Mammary epithelial cell (primary cell): ENCODE measurements at regions of chr12 and their contacts with region 1.

Region 1: GRCh38 chr12:65306366-65307168 is 28.1 kb downstream of the MSRB3 start:
- DNase-seq: peak; percentile 76
- H3K4me3 ChIP-seq: peak overlapping the region; percentile 20 to 33 (median 21)
- H3K27ac ChIP-seq: peak overlapping the region; percentile 90
- H3K4me1 ChIP-seq: peaks cover 29% of the 10 kb centered on the region
- H3K27me3 ChIP-seq: no peaks in the 10 kb centered on the region
- CTCF ChIP-seq: peak; percentile 83 to 84

Region 2: GRCh38 chr12:64890873-64891468 is 415.6 kb before region 1 on chr12:
- CTCF ChIA-PET with region 1: no interaction called
- dilution Hi-C with region 1: no loop called
- in situ Hi-C with region 1: no loop called
- intact Hi-C with region 1: loop called (anchors 5 kb)
- DNase-seq: peak; percentile 33
- H3K4me3 ChIP-seq: no peak overlapping the region
- H3K27ac ChIP-seq: no peak overlapping the region
- H3K4me1 ChIP-seq: no peaks in the 10 kb centered on the region
- H3K27me3 ChIP-seq: peaks cover 9% of the 10 kb centered on the region
- CTCF ChIP-seq: peak; percentile 61 to 67

Region 3: GRCh38 chr12:65343801-65344200 is 37.2 kb after region 1 on chr12:
- CTCF ChIA-PET with region 1: no interaction called
- dilution Hi-C with region 1: no loop called
- in situ Hi-C with region 1: no loop called
- intact Hi-C with region 1: no loop called
- DNase-seq: no peak
- H3K4me3 ChIP-seq: no peak overlapping the region
- H3K27ac ChIP-seq: no peak overlapping the region
- H3K4me1 ChIP-seq: no peaks in the 10 kb centered on the region
- H3K27me3 ChIP-seq: no peaks in the 10 kb centered on the region
- CTCF ChIP-seq: no peak

Region 4: GRCh38 chr12:65695113-65695865 is 388.7 kb after region 1 on chr12:
- CTCF ChIA-PET with region 1: no interaction called
- dilution Hi-C with region 1: no loop called
- in situ Hi-C with region 1: loop called in 1 of 2 experiments (anchors 25 kb)
- intact Hi-C with region 1: loop called (anchors 5 kb)
- DNase-seq: peak; percentile 98
- H3K4me3 ChIP-seq: no peak overlapping the region
- H3K27ac ChIP-seq: peak overlapping the region; percentile 67
- H3K4me1 ChIP-seq: peaks cover 28% of the 10 kb centered on the region
- H3K27me3 ChIP-seq: no peaks in the 10 kb centered on the region
- CTCF ChIP-seq: no peak

Region 5: GRCh38 chr12:65986047-65986446 is 679.5 kb after region 1 on chr12:
- CTCF ChIA-PET with region 1: no interaction called
- dilution Hi-C with region 1: no loop called
- in situ Hi-C with region 1: loop called in 1 of 2 experiments (anchors 25 kb)
- intact Hi-C with region 1: loop called (anchors 2 kb)
- DNase-seq: no peak
- H3K4me3 ChIP-seq: no peak overlapping the region
- H3K27ac ChIP-seq: no peak overlapping the region
- H3K4me1 ChIP-seq: no peaks in the 10 kb centered on the region
- H3K27me3 ChIP-seq: no peaks in the 10 kb centered on the region
- CTCF ChIP-seq: no peak

Region 6: DNA sequence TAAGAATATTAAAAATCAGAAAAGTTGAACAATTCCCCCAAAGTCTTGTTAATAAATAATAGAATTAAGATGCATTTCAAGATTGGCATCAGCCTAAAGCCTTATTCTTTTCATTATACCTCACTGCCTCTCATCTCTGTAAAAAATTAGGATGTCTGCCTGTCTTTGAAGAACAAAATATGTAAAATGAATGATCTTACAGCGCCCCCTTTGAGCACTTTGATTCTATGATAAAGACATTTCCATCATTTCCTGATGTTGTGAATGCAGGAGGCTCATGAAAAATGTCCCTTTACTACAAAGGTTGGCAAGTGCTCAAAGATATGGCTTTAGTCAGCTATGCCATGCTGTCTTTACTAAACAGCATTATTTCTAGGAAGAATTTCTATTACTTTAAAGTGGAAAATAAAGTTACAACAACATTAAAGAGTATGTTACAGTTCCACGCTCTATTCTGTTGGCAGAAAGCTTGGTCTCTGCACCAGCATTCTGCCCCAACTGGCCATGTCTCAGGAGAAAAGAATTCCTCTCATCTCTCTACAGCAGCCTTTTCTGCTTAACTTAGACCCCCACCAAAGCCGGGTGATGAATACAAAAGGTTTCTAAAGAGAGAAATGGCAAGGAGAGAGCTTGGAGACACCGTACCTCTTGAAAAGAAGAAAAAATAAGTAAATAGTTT is 728.9 kb after region 1 on chr12:
- CTCF ChIA-PET with region 1: interaction called, 3 read pairs
- dilution Hi-C with region 1: no loop called
- in situ Hi-C with region 1: no loop called
- intact Hi-C with region 1: loop called (anchors 5 kb)
- DNase-seq: peak; percentile 52
- H3K4me3 ChIP-seq: no peak overlapping the region
- H3K27ac ChIP-seq: peak overlapping the region; percentile 26
- H3K4me1 ChIP-seq: peaks cover 19% of the 10 kb centered on the region
- H3K27me3 ChIP-seq: no peaks in the 10 kb centered on the region
- CTCF ChIP-seq: peak; percentile 55 to 74

Region 7: GRCh38 chr12:66107451-66107915 is 800.9 kb after region 1 on chr12:
- CTCF ChIA-PET with region 1: no interaction called
- dilution Hi-C with region 1: no loop called
- in situ Hi-C with region 1: no loop called
- intact Hi-C with region 1: loop called (anchors 1 kb)
- DNase-seq: peak; percentile 91
- H3K4me3 ChIP-seq: no peak overlapping the region
- H3K27ac ChIP-seq: no peak overlapping the region
- H3K4me1 ChIP-seq: peaks cover 6% of the 10 kb centered on the region
- H3K27me3 ChIP-seq: no peaks in the 10 kb centered on the region
- CTCF ChIP-seq: peak; percentile 69 to 75